ENCODE measurements at regions of chr18 and their contacts with region 1.

Region 1: GRCh38 chr18:2958819-2959298 is 54.1 kb downstream of the LPIN2 start:
- DNase-seq: peak; percentile 46
- H3K4me3 Mint-ChIP-seq: peak overlapping the region; percentile 81
- H3K27ac Mint-ChIP-seq: peak overlapping the region; percentile 99
- H3K4me1 Mint-ChIP-seq: peaks cover 93% of the 10 kb centered on the region
- H3K27me3 Mint-ChIP-seq: no peaks in the 10 kb centered on the region

Region 2: DNA sequence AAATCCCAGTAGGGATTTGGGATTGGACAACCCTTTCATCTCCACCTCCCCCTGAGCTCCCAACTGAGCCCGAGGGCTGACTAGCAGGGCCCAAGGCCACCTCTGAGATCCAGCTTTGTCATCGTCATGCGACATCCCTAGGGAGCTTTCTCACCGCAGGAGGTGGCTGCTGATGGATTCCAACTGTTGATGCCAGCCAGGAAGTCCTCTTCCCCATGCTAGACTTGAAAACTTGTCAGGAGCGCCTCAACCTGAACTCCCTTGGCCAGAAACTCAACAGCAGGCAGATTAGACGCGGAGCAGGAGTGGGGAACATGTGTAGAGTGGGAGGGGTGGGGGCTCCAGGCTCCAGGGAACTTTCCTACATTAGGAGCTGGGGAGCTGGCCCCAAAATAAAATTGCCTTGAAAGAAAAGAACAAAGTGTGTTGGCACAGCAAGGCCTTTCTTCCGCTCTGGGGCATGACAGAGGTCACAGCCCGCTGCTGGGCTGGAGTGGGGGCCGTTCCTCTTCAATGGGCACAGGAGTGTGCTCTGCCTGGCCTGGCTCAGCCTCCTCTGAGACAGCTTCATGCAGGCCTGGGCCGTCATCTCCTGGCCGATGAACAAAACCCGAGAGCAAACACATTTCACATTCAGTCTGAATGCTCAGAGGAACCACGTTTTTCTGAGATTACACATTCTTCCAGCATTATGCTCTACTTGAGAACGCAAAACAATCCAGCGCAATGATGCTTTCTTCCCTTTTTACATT is 77.6 kb before region 1 on chr18:
- intact Hi-C with region 1: no loop called
- DNase-seq: no peak
- H3K4me3 Mint-ChIP-seq: peak overlapping the region; percentile 66
- H3K27ac Mint-ChIP-seq: peak overlapping the region; percentile 52
- H3K4me1 Mint-ChIP-seq: peaks cover 30% of the 10 kb centered on the region
- H3K27me3 Mint-ChIP-seq: peaks cover 3% of the 10 kb centered on the region

Region 3: GRCh38 chr18:2932247-2933181 is 26.3 kb before region 1 on chr18:
- intact Hi-C with region 1: loop called (anchors 1 kb)
- DNase-seq: peak; percentile 29
- H3K4me3 Mint-ChIP-seq: no peak overlapping the region
- H3K27ac Mint-ChIP-seq: peak overlapping the region; percentile 82
- H3K4me1 Mint-ChIP-seq: peaks cover 38% of the 10 kb centered on the region
- H3K27me3 Mint-ChIP-seq: no peaks in the 10 kb centered on the region

Region 4: DNA sequence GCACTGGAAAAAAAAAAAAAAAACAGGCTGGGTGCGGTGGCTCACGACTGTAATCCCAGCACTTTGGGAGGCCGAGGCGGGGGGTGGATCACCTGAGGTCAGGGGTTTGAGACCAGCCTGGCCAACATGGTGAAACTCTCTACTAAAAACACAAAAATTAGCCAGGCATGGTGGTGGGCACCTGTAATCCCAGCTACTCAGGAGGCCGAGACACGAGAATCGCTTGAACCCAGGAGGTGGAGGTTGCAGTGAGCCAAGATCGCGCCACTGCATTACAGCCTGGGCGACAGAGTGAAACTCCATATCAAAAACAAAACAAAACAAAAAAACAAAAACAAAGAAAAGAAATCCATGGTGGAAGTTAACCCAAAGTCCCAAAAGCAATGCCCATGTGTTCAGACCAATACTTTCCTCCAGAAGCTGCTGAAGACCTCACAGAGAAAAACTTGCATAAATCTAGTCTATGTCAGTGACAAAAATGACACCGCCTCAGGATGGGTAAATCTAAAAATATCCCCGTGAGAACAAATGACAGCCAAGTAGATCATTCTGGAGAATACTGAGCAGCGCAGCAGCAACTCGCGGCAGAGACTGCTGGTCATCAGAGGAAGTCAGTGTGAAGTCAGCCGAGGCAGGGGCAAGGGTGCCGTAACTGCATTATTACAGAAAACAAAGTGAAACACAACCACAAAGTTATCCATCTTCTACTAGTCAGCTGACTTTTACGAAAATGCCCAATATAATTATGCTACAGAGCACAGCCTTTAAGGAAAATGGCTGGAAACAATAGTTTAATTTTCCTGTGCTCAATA is 13.1 kb after region 1 on chr18:
- intact Hi-C with region 1: loop called (anchors 1 kb)
- DNase-seq: peak; percentile 62
- H3K4me3 Mint-ChIP-seq: peak overlapping the region; percentile 82
- H3K27ac Mint-ChIP-seq: peak overlapping the region; percentile 95
- H3K4me1 Mint-ChIP-seq: peaks cover 82% of the 10 kb centered on the region
- H3K27me3 Mint-ChIP-seq: no peaks in the 10 kb centered on the region

Region 5: GRCh38 chr18:2978646-2979045 is 19.8 kb after region 1 on chr18:
- intact Hi-C with region 1: loop called (anchors 1 kb)
- DNase-seq: no peak
- H3K4me3 Mint-ChIP-seq: peak overlapping the region; percentile 71
- H3K27ac Mint-ChIP-seq: peak overlapping the region; percentile 89
- H3K4me1 Mint-ChIP-seq: peaks cover 90% of the 10 kb centered on the region
- H3K27me3 Mint-ChIP-seq: no peaks in the 10 kb centered on the region

Region 6: DNA sequence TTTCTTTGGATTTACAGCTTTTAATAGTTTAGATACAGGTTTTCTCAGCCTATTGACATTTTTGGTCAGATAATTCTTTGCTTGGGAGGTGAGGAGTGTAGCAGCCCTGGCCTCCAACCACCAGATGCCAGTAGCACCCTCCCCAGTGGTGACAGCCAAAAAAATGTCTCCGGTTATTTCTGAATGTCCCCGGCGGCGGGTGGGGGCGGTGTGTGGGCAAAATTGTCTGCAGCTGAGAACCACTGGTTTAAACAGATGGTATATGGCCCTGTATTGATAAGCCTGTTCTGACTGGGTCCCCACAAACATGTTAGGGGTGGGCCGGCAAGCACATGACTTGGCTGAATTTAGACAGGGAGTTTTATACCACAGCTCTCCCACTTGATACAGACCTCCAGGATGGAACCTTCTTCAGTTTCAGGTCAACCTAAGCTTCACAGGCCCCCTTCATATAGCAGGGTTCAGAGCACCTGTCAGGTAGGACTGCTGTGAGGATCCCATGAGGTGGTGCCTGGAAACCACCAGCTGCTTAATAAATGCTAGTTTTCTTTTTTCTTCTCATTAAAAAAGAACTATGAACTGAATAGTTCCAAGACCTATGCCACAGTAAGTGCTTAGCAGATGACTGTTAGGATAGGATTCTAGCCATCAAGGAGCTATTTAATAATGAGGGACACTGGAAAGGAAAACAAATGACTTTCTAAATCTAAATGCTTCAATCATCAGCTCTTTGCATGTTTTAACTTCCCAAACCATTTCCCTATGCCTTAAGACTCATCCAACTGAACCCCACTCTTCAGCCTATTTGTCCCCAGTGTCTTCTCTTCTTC is 36.0 kb after region 1 on chr18:
- intact Hi-C with region 1: loop called (anchors 1 kb)
- DNase-seq: peak; percentile 58
- H3K4me3 Mint-ChIP-seq: peak overlapping the region; percentile 60
- H3K27ac Mint-ChIP-seq: peak overlapping the region; percentile 83
- H3K4me1 Mint-ChIP-seq: peaks cover 82% of the 10 kb centered on the region
- H3K27me3 Mint-ChIP-seq: no peaks in the 10 kb centered on the region

Region 7: GRCh38 chr18:3037423-3037915 is 78.6 kb after region 1 on chr18:
- intact Hi-C with region 1: no loop called
- DNase-seq: peak; percentile 34
- H3K4me3 Mint-ChIP-seq: peak overlapping the region; percentile 50
- H3K27ac Mint-ChIP-seq: peak overlapping the region; percentile 82
- H3K4me1 Mint-ChIP-seq: peaks cover 33% of the 10 kb centered on the region
- H3K27me3 Mint-ChIP-seq: no peaks in the 10 kb centered on the region

Region 8: DNA sequence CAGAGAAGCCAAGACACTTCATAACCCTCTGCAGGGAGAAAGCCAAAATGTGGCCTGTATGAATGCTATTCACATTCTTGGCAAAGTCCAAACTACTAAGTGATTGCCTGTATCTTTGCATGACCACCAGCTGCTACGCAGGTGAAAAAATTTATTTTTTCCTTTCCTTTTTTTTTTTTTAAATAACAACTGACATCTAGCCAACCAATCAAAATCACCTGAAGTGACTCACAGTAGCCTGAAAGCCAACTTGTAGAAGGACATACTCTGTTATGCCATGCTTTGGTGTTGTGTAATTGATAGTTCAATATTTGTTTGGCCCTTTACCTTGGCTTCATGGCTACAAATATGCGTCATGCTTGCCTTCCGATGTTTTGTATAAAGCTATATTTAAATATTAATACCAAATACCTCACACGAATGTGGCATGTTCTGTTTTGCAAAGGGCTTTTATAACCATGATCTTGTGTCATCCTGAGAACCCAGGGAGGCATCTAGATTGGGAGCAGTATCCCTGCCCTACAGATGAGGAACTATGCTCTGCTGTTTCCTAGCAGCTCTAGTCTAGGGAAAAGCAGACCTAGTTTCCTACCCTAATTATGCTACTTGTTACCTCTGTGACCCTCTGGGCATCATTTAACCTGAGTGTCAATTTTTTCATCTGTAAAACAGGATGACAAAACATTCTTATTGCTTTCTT is 158.8 kb after region 1 on chr18:
- intact Hi-C with region 1: no loop called
- DNase-seq: no peak
- H3K4me3 Mint-ChIP-seq: no peak overlapping the region
- H3K27ac Mint-ChIP-seq: no peak overlapping the region
- H3K4me1 Mint-ChIP-seq: no peaks in the 10 kb centered on the region
- H3K27me3 Mint-ChIP-seq: no peaks in the 10 kb centered on the region

Measured in activated T-helper 1 cell treated with anti-CD3 and anti-CD28 coated beads, Interleukin-12 subunit alpha, Interleukin-12 subunit beta, Interleukin-2, Interleukin-4 antibody, amounts not matched to agents 30 ng/mL and 10 ng/mL and 1 ng/mL, durations not matched to agents 14 hours and 24 hours and 36 hours (primary cell).